ENCODE measurements at regions of chr15 and their contacts with region 1.

Region 1: DNA sequence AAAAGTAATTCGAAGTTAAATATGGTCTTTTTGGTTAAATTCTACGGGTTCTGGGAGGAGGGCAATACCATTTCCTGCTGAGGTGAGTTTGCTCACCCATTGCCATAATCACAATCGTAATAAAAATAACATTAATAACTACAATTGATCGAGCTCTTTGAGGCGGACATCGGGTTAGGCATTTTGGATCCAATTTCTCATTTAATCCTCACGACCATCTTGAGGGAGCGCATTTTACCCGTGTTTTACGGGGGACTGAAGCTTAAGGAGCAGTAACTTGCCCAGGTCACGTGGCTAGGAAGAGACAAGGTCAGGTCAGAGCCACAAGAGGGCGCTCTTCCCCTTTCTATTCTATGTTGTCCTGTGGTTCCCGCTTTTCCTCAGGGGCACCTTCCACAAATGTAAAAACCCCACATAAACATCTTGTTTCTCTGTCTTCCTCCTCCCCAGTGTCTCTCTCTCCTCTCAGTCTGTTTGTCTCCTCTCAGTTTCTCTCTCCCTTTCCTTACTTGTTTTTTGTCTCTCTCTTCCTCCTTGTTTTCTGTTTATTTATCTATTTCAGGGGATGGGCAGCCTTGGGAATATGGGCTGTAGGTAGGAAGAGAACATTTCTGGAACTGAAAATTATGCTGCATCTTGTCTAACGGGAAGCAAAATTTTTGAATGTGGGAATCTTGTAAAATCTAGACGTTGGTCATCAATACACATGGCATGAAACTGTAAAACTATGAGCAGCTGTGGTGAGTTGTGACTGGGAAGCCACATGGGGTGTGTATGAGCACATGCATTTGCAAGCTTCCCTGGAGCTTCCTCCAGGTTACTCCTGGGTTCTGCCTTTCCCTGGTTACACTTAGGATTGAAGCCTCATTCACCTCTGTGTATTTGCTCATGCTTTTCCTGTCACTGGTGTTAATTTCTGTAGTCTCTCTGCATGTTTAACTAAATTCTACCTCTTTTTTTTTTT is 71.0 kb downstream of the SQOR start:
- DNase-seq: peak; percentile 84
- ATAC-seq: peak; percentile 81
- H3K4me3 Mint-ChIP-seq: peak overlapping the region; percentile 74
- H3K27ac Mint-ChIP-seq: peak overlapping the region; percentile 31
- H3K4me1 Mint-ChIP-seq: peaks cover 11% of the 10 kb centered on the region
- H3K27me3 Mint-ChIP-seq: peaks cover 7% of the 10 kb centered on the region
- CTCF ChIP-seq: peak; percentile 91

Region 2: DNA sequence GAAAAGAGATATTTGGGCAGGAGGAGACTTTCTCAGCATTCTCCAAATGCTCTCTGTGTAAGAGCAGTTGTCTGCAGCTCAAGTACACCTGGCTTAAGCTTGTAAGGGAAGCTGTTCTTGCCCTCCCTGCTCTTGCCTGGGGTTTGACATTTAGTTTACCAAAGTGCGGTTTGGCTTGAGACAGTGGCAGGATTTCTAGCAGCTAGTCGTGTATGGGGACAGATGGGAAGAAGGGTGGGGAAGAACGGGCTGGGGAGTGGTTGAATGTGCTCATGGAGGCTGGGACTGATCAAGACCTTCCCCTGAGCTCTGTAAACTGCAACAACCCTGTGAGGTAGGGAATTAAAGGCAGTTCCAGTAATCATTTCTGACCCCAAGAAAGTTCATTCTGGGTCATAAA is 31.1 kb before region 1 on chr15:
- CTCF ChIA-PET with region 1: interaction called, 10 read pairs
- POLR2A ChIA-PET with region 1: no interaction called
- intact Hi-C with region 1: no loop called
- DNase-seq: no peak
- ATAC-seq: no peak
- H3K4me3 Mint-ChIP-seq: no peak overlapping the region
- H3K27ac Mint-ChIP-seq: peak overlapping the region; percentile 50
- H3K4me1 Mint-ChIP-seq: no peaks in the 10 kb centered on the region
- H3K27me3 Mint-ChIP-seq: no peaks in the 10 kb centered on the region
- CTCF ChIP-seq: no peak

Region 3: GRCh38 chr15:45790325-45790943 is 84.6 kb after region 1 on chr15:
- CTCF ChIA-PET with region 1: interaction called, 30 read pairs
- POLR2A ChIA-PET with region 1: no interaction called
- intact Hi-C with region 1: loop called (anchors 5 kb)
- DNase-seq: peak; percentile 57
- ATAC-seq: peak; percentile 39
- H3K4me3 Mint-ChIP-seq: no peak overlapping the region
- H3K27ac Mint-ChIP-seq: no peak overlapping the region
- H3K4me1 Mint-ChIP-seq: no peaks in the 10 kb centered on the region
- H3K27me3 Mint-ChIP-seq: peaks cover 21% of the 10 kb centered on the region
- CTCF ChIP-seq: peak; percentile 61

Region 4: DNA sequence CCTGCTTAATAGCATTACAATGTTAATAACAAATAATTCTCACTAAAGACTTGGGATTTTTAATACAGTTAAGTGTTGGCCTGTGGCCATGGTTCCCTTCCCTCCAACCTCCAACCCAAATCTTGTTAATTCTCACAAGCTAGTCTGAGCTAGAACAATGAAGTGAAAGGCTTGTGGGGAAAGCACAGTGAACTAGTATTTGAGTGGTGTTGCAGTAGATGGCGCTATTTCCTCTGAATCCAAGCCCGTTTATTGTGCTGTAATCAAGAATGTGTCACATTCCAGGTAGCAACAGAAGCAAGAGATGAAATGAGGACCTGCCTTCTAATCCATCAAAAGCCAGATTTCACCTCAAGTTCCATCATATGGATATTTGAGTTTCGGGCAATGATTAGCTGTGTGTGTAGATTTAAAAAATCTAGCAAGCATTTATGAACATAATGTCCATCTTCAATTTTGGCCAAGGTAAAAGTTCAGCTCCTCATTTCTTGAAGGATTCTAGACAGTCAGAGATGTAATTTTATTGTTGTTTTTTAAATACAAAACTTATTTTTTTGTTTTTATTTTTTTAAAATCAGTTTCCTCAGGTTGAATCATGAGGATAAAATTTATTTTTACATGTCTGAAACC is 89.8 kb after region 1 on chr15:
- CTCF ChIA-PET with region 1: interaction called, 30 read pairs
- POLR2A ChIA-PET with region 1: no interaction called
- intact Hi-C with region 1: loop called (anchors 5 kb)
- DNase-seq: peak; percentile 23
- ATAC-seq: no peak
- H3K4me3 Mint-ChIP-seq: no peak overlapping the region
- H3K27ac Mint-ChIP-seq: no peak overlapping the region
- H3K4me1 Mint-ChIP-seq: no peaks in the 10 kb centered on the region
- H3K27me3 Mint-ChIP-seq: peaks cover 22% of the 10 kb centered on the region
- CTCF ChIP-seq: peak; percentile 65